Cardiac septum (tissue), 1 donor: ENCODE measurements at regions of chr1 and their contacts with region 1.

Region 1: DNA sequence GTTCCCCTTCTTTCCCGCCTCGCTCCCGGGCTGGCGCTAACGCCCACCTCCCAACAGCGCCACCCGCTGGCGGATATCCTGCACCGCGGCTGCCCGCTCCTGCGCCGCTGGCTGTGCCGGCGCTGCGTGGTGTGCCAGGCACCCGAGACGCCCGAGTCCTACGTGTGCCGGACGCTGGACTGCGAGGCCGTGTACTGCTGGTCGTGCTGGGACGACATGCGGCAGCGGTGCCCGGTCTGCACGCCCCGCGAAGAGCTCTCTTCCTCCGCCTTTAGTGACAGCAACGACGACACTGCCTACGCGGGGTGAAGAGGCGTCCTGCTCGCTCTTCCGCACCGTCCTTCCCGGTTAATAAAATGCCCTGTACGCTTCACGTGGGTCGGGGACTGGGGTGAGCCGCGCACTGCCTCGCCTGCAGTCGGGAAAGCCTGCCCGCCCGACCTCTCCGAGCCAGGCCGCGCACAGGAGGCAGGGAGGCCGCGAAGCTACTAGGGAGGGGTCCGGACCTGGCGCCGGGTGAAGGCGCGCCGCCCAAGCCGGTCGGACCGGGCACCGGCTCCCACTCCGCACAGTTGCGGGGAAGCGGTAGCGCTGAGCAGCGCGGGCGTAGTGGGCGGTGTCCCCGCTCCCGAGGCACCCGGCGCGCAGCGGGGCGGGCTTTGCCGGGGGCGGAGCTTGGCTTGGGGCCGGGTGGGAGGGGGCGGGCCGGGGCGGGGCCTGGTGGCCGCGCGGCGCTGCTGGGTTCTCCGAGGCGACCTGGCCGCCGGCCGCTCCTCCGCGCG is at the start of gene ADAM15:
- DNase-seq: peak; percentile 94
- total RNA-seq, gene ADAM15: 69.9 TPM

Region 2: GRCh38 chr1:155001675-155002463 is 48.9 kb before region 1 on chr1:
- intact Hi-C with region 1: loop called (anchors 2 kb)
- DNase-seq: peak; percentile 100

Region 3: DNA sequence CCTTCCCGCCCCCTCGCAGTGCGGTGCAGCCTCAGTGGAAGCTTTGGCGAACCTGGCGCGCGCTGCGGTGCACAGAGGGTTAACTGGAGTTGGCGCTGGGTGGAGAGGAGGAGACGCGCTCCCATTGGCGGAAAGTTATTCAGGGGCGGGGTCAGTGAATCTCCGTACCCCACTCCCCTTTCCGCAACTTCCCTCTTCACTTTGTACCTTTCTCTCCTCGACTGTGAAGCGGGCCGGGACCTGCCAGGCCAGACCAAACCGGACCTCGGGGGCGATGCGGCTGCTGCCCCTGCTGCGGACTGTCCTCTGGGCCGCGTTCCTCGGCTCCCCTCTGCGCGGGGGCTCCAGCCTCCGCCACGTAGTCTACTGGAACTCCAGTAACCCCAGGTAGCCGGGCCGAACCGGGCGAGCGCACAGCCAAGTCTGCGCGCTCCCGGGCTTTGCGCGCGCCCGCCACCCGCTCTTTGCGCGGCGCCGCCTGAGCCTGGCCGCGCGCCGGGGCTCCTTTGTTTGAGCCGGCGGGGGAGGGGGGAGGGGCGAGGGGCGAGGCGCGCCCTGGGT is 12.9 kb after region 1 on chr1 and contains the start of gene EFNA4:
- intact Hi-C with region 1: loop called (anchors 2 kb)
- DNase-seq: peak; percentile 94
- total RNA-seq, gene EFNA4: 1.9 TPM

Region 4: DNA sequence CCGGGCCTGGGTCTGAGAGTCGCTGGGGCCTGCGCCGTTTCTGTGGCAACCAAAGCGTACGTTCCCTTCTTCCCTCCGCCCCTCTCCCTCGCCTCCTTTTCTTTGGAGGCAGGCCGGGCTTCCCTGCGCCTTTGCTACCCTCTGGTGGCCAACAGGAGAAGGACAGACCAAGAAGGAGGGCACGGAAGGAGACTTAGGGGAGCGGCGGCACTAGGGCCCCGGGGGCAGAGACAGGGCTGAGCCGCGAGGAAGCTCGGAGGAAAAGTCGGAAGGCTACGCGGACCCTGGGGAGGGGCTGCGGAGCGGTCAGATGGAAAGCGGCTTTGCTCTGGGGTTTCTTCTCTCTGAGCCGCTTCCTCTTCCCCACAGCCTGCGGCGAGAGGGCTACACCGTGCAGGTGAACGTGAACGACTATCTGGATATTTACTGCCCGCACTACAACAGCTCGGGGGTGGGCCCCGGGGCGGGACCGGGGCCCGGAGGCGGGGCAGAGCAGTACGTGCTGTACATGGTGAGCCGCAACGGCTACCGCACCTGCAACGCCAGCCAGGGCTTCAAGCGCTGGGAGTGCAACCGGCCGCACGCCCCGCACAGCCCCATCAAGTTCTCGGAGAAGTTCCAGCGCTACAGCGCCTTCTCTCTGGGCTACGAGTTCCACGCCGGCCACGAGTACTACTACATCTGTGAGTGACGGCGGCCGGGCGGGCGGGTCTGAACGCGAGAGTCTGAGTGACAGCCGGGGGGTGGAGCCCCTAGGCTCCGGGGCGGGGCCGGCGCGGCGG is 34.2 kb after region 1 on chr1:
- intact Hi-C with region 1: loop called (anchors 2 kb)
- DNase-seq: peak; percentile 96

Region 5: DNA sequence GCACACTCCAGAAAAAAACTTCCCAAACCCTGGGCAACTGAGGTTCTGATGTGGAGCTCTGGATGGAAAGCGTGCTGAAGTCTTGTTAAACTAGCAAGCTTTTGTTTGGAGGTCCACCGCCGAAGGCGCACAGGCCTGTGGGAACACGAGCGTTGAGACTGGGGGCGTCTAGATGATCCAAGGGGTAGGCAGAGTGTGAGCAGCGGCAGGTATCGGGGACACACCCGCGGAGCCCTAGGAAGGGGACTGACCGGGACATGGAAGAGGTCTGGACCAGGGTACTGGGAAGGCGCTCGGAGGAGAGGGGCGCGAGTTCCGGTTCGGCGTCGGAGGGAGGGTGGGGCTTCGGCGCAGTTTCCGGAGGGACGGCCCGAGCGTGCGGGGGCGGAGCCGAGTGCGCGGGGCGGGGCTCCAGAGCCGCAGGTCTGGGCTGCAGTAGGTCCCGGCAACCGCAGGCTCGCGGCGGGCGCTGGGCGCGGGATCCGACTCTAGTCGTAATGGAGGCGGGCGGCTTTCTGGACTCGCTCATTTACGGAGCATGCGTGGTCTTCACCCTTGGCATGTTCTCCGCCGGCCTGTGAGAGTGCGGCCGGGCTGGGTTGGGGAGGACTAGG is 84.8 kb after region 1 on chr1 and contains the start of gene SLC50A1:
- intact Hi-C with region 1: loop called (anchors 5 kb)
- DNase-seq: peak; percentile 97
- total RNA-seq, gene SLC50A1: 11.2 TPM